Posterior vena cava (tissue), 2 donors: ENCODE measurements at regions of chr7 and their contacts with region 1.

Region 1: GRCh38 chr7:32611201-32612099 is 116.2 kb downstream of the AVL9 start:
- DNase-seq: no peak

Region 2: GRCh38 chr7:32660936-32661335 is 49.5 kb after region 1 on chr7:
- intact Hi-C with region 1: loop called in 1 of 2 experiments (anchors 1 kb)
- DNase-seq: no peak